Dorsolateral prefrontal cortex (tissue), 120 donors: ENCODE measurements at regions of chr15 and their contacts with region 1.

Region 1: GRCh38 chr15:56984681-56985481 is 66.4 kb downstream of the TCF12 start:
- DNase-seq: no peak
- H3K4me3 ChIP-seq: no peak overlapping the region
- H3K27ac ChIP-seq: peak overlapping the region in 50 of 59 donors; percentile 1 to 74 (median 46)
- H3K27me3 ChIP-seq: no peaks in the 10 kb centered on the region
- CTCF ChIP-seq: no peak

Region 2: GRCh38 chr15:56950979-56951378 is 33.9 kb before region 1 on chr15:
- intact Hi-C with region 1: loop called in 1 of 2 experiments (anchors 1 kb)
- DNase-seq: no peak
- H3K4me3 ChIP-seq: no peak overlapping the region
- H3K27ac ChIP-seq: peak overlapping the region in 6 of 59 donors; percentile 0 to 49 (median 28)
- H3K27me3 ChIP-seq: no peaks in the 10 kb centered on the region
- CTCF ChIP-seq: no peak

Region 3: DNA sequence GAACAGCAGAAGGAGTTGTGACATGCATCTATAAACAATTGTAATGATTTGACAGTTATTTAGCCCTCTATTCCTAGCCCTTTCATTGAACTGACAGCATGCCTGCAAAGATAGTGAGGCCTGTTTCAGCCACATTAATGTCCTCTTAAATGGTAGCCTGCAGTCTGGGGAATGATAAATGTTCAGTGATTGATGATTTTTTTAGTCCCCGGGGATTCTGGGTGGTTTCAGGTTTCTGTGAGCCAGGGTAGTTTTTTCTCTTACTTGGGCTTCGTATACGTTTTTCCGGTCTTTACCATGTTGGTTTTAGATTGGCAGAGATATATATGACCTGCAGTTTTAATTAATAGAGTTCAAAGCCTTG is 105.6 kb after region 1 on chr15:
- intact Hi-C with region 1: no loop called
- DNase-seq: no peak
- H3K4me3 ChIP-seq: no peak overlapping the region
- H3K27ac ChIP-seq: peak overlapping the region in 27 of 59 donors; percentile 3 to 70 (median 35)
- H3K27me3 ChIP-seq: no peaks in the 10 kb centered on the region
- CTCF ChIP-seq: no peak